Endothelial cell of umbilical vein (primary cell): ENCODE measurements at regions of chr6 and their contacts with region 1.

Region 1: DNA sequence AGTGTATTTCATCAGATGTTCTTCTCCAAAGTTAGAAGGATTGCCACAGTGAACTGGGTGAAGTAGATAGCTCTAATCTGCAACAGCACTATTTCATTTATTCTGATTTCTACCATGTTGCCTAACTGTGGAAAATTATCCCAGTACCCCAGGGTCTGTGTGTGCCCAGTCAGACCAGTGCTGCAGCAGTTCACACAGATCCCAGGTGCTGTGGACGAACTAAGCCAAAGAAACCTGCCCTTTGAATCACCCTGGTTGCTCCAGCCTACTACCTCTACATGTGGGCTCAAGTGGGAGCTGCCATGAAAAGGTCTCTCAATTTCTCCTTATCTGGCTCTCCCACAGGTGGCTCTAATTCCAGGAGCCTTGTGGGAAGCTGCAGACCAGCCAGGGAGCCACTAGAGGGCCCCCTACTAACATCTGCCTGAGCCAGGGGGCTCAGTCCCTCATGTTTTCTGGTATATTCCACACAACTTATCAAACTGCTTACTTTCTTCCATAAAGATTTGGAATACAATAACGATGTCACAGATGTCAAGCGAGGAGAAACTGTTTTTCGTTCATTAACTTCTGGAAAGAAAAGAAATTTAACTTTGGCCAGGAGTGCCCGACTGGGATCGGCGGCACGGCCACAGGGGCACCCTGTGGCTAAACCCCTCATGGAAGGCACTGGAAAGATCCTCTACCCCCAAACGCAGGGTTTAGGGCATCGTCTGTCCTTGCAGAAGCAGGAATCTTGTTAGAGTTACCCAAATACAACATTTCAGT is 31.6 kb upstream of the LY86 start:
- DNase-seq: peak; percentile 44
- H3K4me3 ChIP-seq: no peak overlapping the region
- H3K27ac ChIP-seq: no peak overlapping the region
- H3K4me1 ChIP-seq: no peaks in the 10 kb centered on the region
- H3K27me3 ChIP-seq: no peaks in the 10 kb centered on the region
- CTCF ChIP-seq: peak; percentile 84 to 89
- POLR2A ChIP-seq: no peak

Region 2: DNA sequence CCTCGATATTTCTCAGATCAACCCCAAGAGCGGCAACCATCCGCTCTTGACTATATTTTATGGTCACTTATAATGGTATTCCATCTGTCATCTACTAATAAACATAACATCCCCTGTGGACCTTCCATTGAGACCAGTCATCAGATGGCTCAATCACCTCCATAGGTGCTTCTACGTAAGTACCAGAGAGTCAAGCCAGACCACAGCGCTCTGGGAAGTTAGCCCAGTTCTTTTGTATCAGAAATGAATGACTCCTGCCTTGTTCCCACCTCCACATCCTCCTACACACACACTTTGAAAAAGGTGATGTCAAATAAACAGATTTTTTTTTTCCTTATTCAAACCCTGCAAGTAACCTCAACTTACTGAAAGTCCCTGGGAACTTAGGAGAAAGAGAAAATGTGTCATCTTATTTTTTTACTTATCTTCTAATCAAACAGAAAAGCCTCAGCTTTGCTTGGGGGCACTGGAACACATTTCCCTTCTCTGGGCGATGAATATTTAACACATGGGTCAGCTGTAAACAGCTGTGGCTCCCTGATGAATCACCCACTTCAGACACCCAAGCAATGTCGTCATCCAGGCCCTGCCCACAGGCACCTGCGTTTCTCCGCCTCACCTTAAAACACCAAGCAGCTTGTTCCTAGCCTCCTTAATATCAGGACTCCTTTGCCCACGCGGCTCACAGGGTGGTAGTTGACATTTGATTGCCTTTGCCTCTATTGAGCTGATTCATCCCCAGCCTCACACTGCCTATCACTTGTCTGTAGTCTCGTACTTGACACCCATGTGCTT is 89.8 kb before region 1 on chr6:
- CTCF ChIA-PET with region 1: no interaction called
- POLR2A ChIA-PET with region 1: no interaction called
- dilution Hi-C with region 1: no loop called
- intact Hi-C with region 1: no loop called
- DNase-seq: no peak
- H3K4me3 ChIP-seq: no peak overlapping the region
- H3K27ac ChIP-seq: no peak overlapping the region
- H3K4me1 ChIP-seq: no peaks in the 10 kb centered on the region
- H3K27me3 ChIP-seq: no peaks in the 10 kb centered on the region
- CTCF ChIP-seq: no peak
- POLR2A ChIP-seq: no peak

Region 3: GRCh38 chr6:6505111-6505510 is 51.8 kb before region 1 on chr6:
- CTCF ChIA-PET with region 1: no interaction called
- POLR2A ChIA-PET with region 1: no interaction called
- dilution Hi-C with region 1: no loop called
- intact Hi-C with region 1: no loop called
- DNase-seq: no peak
- H3K4me3 ChIP-seq: no peak overlapping the region
- H3K27ac ChIP-seq: no peak overlapping the region
- H3K4me1 ChIP-seq: no peaks in the 10 kb centered on the region
- H3K27me3 ChIP-seq: no peaks in the 10 kb centered on the region
- CTCF ChIP-seq: no peak
- POLR2A ChIP-seq: no peak

Region 4: GRCh38 chr6:6591778-6592465 is 35.0 kb after region 1 on chr6:
- CTCF ChIA-PET with region 1: no interaction called
- POLR2A ChIA-PET with region 1: no interaction called
- dilution Hi-C with region 1: no loop called
- intact Hi-C with region 1: no loop called
- DNase-seq: no peak
- H3K4me3 ChIP-seq: no peak overlapping the region
- H3K27ac ChIP-seq: no peak overlapping the region
- H3K4me1 ChIP-seq: no peaks in the 10 kb centered on the region
- H3K27me3 ChIP-seq: no peaks in the 10 kb centered on the region
- CTCF ChIP-seq: no peak
- POLR2A ChIP-seq: no peak

Region 5: DNA sequence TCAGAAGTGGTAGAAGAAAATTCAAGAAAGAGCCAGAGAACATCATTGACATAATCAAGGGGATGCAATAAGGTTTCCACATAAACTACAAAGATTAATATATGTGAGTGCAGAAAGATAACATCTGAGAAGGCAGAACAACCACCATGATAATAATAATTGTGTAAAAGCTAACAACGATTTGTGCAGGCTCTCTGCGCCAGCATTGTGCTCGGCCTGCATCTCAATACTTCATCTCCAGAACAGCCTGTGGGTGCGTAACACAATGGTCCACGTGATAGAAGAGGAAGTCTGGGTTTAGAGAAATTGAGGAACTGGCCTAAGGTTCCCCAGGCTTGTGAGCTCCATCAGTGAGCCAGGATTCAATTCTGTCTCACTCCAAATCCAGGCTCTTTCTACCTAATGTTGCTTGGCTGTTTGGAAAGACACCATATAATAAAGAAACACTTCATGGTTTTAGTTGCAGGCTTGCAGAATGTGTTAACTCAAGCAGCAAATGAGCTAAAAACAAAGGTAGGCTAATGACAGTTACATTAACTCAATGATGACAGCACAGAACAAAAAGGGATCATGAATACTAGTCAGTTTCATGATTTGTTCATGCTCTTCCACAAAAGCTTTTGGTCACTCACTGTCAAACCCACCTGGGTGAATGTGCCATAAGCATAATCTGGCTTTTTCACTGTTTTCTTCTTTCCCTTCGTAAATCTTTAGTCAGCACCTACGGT is 102.8 kb after region 1 on chr6:
- CTCF ChIA-PET with region 1: no interaction called
- POLR2A ChIA-PET with region 1: no interaction called
- dilution Hi-C with region 1: no loop called
- intact Hi-C with region 1: loop called (anchors 5 kb)
- DNase-seq: no peak
- H3K4me3 ChIP-seq: no peak overlapping the region
- H3K27ac ChIP-seq: no peak overlapping the region
- H3K4me1 ChIP-seq: peaks cover 11% of the 10 kb centered on the region
- H3K27me3 ChIP-seq: no peaks in the 10 kb centered on the region
- CTCF ChIP-seq: no peak
- POLR2A ChIP-seq: no peak

Region 6: DNA sequence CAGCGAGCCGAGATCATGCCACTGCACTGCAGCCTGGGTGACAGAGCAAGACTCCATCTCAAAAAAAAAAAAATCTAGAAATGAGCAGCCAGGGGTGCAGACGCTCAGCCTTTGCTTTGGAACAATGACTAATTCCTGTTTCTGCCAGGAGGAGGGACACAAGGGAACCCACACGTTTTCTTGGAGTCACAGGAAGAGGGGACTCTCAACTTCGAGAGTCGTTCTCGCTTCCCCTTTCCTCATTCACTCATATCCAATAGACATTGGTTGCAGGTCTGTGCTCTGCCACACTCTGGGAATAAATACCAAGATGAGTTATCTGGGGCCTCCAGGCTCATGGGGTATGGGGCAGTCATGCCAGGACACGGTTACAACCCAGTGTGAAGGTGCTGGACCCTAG is 459.3 kb after region 1 on chr6:
- CTCF ChIA-PET with region 1: no interaction called
- POLR2A ChIA-PET with region 1: no interaction called
- dilution Hi-C with region 1: no loop called
- intact Hi-C with region 1: no loop called
- DNase-seq: no peak
- H3K4me3 ChIP-seq: no peak overlapping the region
- H3K27ac ChIP-seq: no peak overlapping the region
- H3K4me1 ChIP-seq: no peaks in the 10 kb centered on the region
- H3K27me3 ChIP-seq: peaks cover 0 to 7% of the 10 kb centered on the region in 2 experiments
- CTCF ChIP-seq: no peak
- POLR2A ChIP-seq: no peak